Activated CD8-positive, alpha-beta T cell treated with anti-CD3 and anti-CD28 coated beads for 36 hours (primary cell): ENCODE measurements at regions of chr1 and their contacts with region 1.

Region 1: GRCh38 chr1:12124693-12125421 is 41.9 kb upstream of the TNFRSF1B start:
- DNase-seq: peak; percentile 85
- ATAC-seq: peak; percentile 49
- H3K4me3 Mint-ChIP-seq: no peak overlapping the region
- H3K27ac Mint-ChIP-seq: peak overlapping the region; percentile 73
- H3K4me1 Mint-ChIP-seq: peaks cover 60% of the 10 kb centered on the region
- H3K27me3 Mint-ChIP-seq: peaks cover 8% of the 10 kb centered on the region
- CTCF ChIP-seq: peak; percentile 99

Region 2: DNA sequence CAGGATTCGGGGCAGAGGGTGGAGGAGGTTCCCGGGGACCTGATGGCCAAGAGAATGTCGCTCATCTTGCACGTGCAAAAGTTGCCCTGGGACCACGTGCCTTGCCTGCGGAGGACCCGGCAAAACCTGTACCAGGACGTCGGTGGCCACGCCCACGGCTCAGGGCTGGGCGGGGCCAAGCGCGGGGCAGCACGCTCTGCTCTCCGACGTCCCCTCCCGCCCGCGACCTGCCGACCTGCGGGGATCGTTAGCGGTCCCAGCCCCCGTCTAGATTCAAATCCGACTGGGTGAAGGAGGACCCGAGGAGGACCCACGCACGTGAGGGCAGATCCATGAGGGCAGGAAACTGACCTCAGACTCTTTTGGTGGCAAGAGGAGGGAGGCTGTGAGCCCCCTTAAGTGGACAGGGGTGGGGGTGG is 362.9 kb before region 1 on chr1 and contains the start of gene C1orf167:
- CTCF ChIA-PET with region 1: no interaction called
- POLR2A ChIA-PET with region 1: no interaction called
- intact Hi-C with region 1: no loop called
- DNase-seq: peak; percentile 44
- ATAC-seq: peak; percentile 78
- H3K4me3 Mint-ChIP-seq: no peak within 1 kb of the TSS
- H3K27ac Mint-ChIP-seq: no peak within 1 kb of the TSS
- H3K4me1 Mint-ChIP-seq: peaks cover 4% of the 10 kb centered on the region
- H3K27me3 Mint-ChIP-seq: peaks cover 12% of the 10 kb centered on the region
- CTCF ChIP-seq: no peak
- total RNA-seq, gene C1orf167: not detected

Region 3: GRCh38 chr1:11979851-11980675 is 144.8 kb before region 1 on chr1 and contains the start of gene MFN2:
- CTCF ChIA-PET with region 1: no interaction called
- POLR2A ChIA-PET with region 1: no interaction called
- intact Hi-C with region 1: no loop called
- DNase-seq: peak; percentile 97
- ATAC-seq: peak; percentile 93
- H3K4me3 Mint-ChIP-seq: peak within 1 kb of the TSS; percentile 92
- H3K27ac Mint-ChIP-seq: peak within 1 kb of the TSS; percentile 89
- H3K4me1 Mint-ChIP-seq: peaks cover 28% of the 10 kb centered on the region
- H3K27me3 Mint-ChIP-seq: no peaks in the 10 kb centered on the region
- CTCF ChIP-seq: no peak
- total RNA-seq, gene MFN2: 51.0 to 51.1 TPM

Region 4: GRCh38 chr1:12113433-12114339 is 11.2 kb before region 1 on chr1:
- CTCF ChIA-PET with region 1: interaction called, 17 read pairs
- POLR2A ChIA-PET with region 1: interaction called, 3 read pairs
- intact Hi-C with region 1: no loop called
- DNase-seq: peak; percentile 36
- ATAC-seq: peak; percentile 79
- H3K4me3 Mint-ChIP-seq: no peak overlapping the region
- H3K27ac Mint-ChIP-seq: peak overlapping the region; percentile 40
- H3K4me1 Mint-ChIP-seq: peaks cover 9% of the 10 kb centered on the region
- H3K27me3 Mint-ChIP-seq: no peaks in the 10 kb centered on the region
- CTCF ChIP-seq: no peak

Region 5: DNA sequence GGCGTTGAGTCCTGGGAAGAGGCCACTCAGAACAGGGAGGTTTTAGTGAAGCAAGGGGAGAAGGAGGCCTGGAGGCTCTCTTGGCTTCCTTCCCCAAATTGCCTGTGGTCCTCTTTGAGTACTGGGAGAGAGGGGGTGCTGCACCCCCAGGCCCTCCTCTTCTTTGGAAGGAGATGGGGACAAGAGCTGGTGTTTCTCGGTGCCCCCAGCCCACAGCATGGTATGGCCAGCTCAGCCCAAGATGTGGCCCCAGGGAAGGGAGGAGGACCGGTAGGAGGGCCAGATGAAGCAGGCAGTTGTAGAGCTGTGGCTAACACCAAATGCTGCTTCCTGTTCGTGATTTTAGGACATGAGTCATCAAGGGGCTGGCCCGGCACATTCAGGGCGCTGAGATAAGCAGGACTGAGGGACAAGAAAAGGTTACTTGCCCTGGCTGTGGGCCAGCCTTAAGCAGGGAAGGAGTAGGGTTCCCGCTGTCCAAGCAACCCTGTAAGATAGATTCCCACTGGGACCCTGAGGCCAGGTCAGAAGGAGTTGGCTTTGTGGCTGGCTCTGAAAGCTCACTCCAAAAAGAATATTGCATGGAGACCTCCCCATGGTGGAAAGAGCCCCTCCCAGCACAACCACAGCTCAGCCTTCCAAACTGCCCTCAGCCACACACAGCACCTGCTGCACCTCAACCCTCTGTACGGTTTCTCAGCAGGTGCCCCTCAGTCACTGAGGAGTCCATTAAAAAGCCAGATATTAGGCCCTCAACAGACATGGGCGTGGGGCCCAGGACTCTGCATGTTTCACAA is 37.0 kb after region 1 on chr1:
- CTCF ChIA-PET with region 1: interaction called, 32 read pairs
- POLR2A ChIA-PET with region 1: interaction called, 5 read pairs
- intact Hi-C with region 1: loop called (anchors 5 kb)
- DNase-seq: peak; percentile 93
- ATAC-seq: peak; percentile 78
- H3K4me3 Mint-ChIP-seq: peak overlapping the region; percentile 11
- H3K27ac Mint-ChIP-seq: peak overlapping the region; percentile 95
- H3K4me1 Mint-ChIP-seq: peaks cover 79% of the 10 kb centered on the region
- H3K27me3 Mint-ChIP-seq: no peaks in the 10 kb centered on the region
- CTCF ChIP-seq: no peak

Region 6: DNA sequence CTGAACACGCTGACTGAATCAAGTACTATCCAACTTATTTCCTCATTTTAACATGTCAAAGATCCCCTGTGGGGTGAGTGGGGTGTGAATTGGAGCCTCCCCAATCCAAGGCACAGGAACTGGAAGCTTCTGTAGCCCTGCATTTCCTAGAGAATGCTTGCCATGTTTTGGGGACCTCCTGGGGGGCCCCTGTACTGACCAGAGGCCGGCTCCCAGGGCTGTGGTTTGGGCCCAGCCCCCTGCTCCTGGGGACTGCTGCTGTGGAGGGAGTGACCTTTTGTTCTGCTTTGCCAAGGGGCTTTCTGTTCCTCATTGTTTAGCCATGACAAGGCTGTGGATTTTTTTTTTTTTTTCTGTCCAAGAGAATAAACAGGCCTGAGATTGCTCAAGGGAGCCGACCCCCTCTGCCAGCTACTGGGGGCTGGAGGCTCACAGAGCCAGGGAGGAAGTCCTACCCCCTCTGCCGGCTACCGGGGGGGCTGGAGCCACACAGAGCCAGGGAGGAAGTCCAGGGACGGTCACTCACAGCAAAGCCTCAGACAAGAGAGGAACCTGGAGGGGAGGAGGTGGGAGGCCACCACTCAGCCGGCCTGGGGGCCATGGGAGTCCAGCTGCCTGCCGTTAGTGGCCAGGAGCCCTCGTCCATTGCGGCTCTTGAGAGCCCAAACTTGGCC is 59.3 kb after region 1 on chr1:
- CTCF ChIA-PET with region 1: interaction called, 98 read pairs
- POLR2A ChIA-PET with region 1: interaction called, 18 read pairs
- intact Hi-C with region 1: loop called (anchors 5 kb)
- DNase-seq: no peak
- ATAC-seq: no peak
- H3K4me3 Mint-ChIP-seq: no peak overlapping the region
- H3K27ac Mint-ChIP-seq: peak overlapping the region; percentile 25
- H3K4me1 Mint-ChIP-seq: peaks cover 60% of the 10 kb centered on the region
- H3K27me3 Mint-ChIP-seq: no peaks in the 10 kb centered on the region
- CTCF ChIP-seq: no peak

Region 7: DNA sequence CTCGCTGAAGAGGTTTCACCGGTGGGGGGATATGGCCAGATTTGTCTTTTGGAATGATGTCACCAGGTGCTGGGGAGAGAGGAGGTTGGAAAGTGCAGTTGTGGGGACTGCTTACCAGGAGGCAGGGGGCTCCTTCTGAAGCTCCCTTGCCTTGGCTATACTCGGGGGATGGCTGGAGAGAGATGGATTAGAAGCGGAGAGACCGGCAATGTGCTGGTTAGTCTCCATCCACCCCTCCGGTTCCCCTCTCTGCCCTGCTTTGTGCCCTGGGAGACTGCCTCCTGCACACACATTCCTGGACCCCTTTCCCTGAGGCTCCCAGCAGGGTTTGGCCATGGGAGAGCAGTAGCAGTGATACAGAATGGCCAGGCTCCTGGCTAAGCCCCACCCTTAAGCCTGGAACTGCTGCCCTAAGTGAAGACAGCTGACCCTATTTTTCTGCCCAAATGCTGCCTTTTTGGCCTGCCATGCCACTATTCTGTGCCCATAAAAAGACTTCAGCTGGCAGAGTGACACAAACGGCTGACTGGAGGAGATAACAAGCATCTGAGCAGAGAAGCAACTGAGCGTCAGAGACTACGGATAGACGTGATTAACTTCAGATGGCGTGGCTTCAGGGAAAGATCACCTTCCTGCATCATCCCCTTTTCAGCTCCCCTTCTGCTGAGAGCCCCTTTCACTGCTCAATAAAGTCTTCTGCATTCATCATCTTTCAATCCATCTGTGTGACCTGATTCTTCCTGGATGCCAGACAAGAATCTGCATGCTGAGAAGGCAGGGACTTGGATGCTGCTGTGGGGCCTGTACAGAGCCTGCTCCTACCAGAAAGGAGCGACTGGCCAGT is 90.5 kb after region 1 on chr1:
- CTCF ChIA-PET with region 1: interaction called, 395 read pairs
- POLR2A ChIA-PET with region 1: interaction called, 51 read pairs
- intact Hi-C with region 1: no loop called
- DNase-seq: no peak
- ATAC-seq: no peak
- H3K4me3 Mint-ChIP-seq: no peak overlapping the region
- H3K27ac Mint-ChIP-seq: no peak overlapping the region
- H3K4me1 Mint-ChIP-seq: peaks cover 6% of the 10 kb centered on the region
- H3K27me3 Mint-ChIP-seq: no peaks in the 10 kb centered on the region
- CTCF ChIP-seq: no peak

Region 8: GRCh38 chr1:12244078-12244477 is 119.2 kb after region 1 on chr1:
- CTCF ChIA-PET with region 1: interaction called, 57 read pairs
- POLR2A ChIA-PET with region 1: no interaction called
- intact Hi-C with region 1: no loop called
- DNase-seq: peak; percentile 31
- ATAC-seq: no peak
- H3K4me3 Mint-ChIP-seq: no peak overlapping the region
- H3K27ac Mint-ChIP-seq: no peak overlapping the region
- H3K4me1 Mint-ChIP-seq: peaks cover 5% of the 10 kb centered on the region
- H3K27me3 Mint-ChIP-seq: no peaks in the 10 kb centered on the region
- CTCF ChIP-seq: peak; percentile 54

Region 9: GRCh38 chr1:12658531-12659453 is 533.9 kb after region 1 on chr1:
- CTCF ChIA-PET with region 1: interaction called, 10 read pairs
- POLR2A ChIA-PET with region 1: no interaction called
- intact Hi-C with region 1: no loop called
- DNase-seq: peak; percentile 78
- ATAC-seq: peak; percentile 90
- H3K4me3 Mint-ChIP-seq: peak overlapping the region; percentile 22
- H3K27ac Mint-ChIP-seq: no peak overlapping the region
- H3K4me1 Mint-ChIP-seq: peaks cover 7% of the 10 kb centered on the region
- H3K27me3 Mint-ChIP-seq: peaks cover 6% of the 10 kb centered on the region
- CTCF ChIP-seq: peak; percentile 97